PC-9 (cell line): ENCODE measurements at regions of chr16 and their contacts with region 1.

Region 1: DNA sequence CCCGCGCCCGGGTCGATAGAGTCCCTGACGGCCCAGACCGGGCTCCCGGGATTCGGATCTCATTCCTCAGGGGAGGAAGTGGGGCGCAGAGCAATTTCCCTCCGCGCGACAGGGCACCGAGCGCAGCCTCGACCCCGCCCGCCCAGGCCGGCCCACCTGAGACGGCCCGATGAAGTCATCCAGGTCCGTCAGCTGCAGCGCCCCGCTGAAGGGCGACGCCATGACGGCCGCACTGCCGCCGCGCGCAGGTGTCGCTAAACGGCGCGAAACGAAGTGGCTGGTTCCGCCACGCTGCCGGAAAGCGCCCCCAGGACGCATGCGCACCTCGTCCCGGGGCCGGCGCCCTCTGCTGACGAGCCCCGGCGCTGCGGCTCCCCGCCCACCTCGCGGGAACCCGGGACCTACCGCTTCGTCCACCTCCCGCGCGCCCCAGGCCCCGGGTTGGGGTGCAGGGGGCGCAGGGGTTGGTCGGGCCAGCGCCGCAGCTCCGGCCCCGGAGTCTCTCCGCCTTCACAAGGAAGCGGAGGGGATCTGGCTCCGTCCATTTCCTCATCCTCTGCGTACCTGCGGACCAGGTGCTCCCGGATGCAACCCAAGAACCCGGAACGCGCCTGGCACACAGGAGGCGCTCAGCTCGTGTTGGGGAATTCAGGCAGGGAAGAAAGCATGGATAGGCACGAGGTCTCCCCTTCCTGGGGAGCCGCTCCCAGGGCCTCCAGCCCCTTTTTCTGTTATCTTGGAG is at the start of gene CIAO3:
- DNase-seq: peak; percentile 78 to 96
- H3K4me3 ChIP-seq: peak within 1 kb of the TSS; percentile 91
- H3K27ac ChIP-seq: peak within 1 kb of the TSS; percentile 34; the same call in 1 of the 2 replicates
- H3K4me1 ChIP-seq: no peaks in the 10 kb centered on the region; the same call in 1 of the 2 replicates
- H3K27me3 ChIP-seq: no peaks in the 10 kb centered on the region
- CTCF ChIP-seq: peak; percentile 82
- total RNA-seq, gene CIAO3: 44.2 and 45.8 TPM in 2 replicates

Region 2: GRCh38 chr16:684067-684794 is 56.7 kb before region 1 on chr16 and contains the start of gene JMJD8:
- CTCF ChIA-PET with region 1: no interaction called
- POLR2A ChIA-PET with region 1: no interaction called
- intact Hi-C with region 1: no loop called
- DNase-seq: peak; percentile 92 to 99
- H3K4me3 ChIP-seq: peak within 1 kb of the TSS; percentile 83
- H3K27ac ChIP-seq: no peak within 1 kb of the TSS
- H3K4me1 ChIP-seq: peaks cover 37% of the 10 kb centered on the region
- H3K27me3 ChIP-seq: no peaks in the 10 kb centered on the region
- CTCF ChIP-seq: no peak
- total RNA-seq, gene JMJD8: 57.4 and 61.6 TPM in 2 replicates

Region 3: DNA sequence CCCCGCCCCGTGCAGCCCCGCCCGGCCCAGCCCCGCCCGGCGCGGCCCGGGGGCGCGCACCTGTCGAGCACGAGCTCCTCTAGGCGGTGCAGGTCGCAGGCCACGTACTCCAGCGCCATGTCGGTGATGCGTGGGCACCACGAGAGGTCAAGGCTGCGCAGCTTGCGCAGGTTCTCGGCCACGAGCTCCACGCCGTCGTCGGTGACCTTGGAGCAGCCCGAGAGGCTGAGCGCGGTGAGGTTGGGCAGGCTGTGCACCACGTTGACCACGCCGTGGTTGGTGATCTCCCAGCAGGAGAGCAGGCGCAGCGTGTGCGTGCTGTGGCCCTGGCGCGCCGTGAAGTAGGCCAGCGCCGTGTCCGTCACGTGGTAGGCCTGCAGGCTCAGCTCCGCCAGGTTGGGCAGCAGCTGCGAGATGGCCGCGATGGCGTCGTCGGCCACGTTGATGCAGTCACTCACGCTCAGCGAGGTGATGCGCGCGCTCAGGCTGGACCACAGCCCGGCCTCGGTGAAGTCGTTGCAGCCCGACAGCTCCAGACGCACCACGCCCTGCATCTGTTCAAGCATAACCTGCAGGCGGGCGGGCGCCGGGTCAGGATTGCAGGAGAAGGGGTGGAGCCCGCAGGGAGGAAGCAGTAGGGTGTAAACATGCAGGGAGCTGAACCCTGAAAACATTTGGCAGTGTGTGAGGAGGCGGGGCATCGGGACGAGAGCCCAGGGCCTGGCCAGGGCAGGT is 45.4 kb before region 1 on chr16:
- CTCF ChIA-PET with region 1: interaction called, 10 read pairs
- POLR2A ChIA-PET with region 1: no interaction called
- intact Hi-C with region 1: no loop called
- DNase-seq: peak; percentile 72 to 93
- H3K4me3 ChIP-seq: no peak overlapping the region
- H3K27ac ChIP-seq: no peak overlapping the region
- H3K4me1 ChIP-seq: peaks cover 8% of the 10 kb centered on the region
- H3K27me3 ChIP-seq: peaks cover 8% of the 10 kb centered on the region; the same call in 1 of the 2 replicates
- CTCF ChIP-seq: no peak

Region 4: DNA sequence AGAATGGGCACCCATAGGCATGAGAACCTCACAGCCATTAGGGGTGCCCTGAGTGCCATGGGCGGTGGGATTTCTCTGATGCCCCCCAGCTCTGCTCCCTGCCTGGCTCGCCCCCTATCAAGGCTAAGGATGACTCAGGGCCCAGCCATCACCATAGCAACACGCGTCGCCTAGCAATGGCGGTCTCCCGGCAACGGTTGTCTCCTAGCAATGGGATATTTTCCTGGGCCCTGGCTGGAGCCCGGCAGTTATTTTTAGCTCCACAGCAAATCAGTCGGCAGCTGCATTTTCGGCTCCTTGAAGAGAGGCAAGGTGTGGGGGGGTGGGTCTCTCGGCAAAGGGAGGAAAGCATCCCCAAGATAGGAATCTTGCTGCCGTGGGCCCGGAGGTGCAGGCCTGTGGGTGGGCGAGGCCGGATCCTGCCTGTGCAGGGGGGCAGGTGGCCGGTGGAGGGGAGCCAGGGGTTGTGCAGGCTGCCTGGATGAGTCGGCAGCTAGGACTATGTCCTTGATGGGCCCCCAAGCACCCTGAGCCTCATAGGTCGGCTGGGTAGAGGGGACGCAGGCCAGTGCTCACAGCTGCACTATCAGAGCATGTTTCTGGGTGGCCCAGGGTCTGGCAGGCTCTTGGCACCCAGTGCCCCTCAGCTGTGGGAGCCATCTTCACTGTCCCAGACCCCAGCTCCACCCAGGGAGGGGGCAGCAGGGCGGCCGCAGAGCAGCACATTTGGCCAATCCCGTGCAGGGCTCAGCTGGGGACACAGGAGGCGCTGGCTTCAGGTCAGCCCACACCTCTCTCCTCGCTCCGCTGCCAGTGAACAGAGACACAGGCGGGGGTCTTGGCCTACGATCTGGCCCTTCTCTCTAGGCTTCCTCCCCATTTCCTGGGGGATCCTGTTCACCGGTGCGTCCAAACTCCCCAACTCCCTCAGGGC is 31.1 kb before region 1 on chr16:
- CTCF ChIA-PET with region 1: no interaction called
- POLR2A ChIA-PET with region 1: no interaction called
- intact Hi-C with region 1: no loop called
- DNase-seq: peak; percentile 66
- H3K4me3 ChIP-seq: no peak overlapping the region
- H3K27ac ChIP-seq: no peak overlapping the region
- H3K4me1 ChIP-seq: peaks cover 25% of the 10 kb centered on the region
- H3K27me3 ChIP-seq: peaks cover 47% of the 10 kb centered on the region
- CTCF ChIP-seq: no peak

Region 5: DNA sequence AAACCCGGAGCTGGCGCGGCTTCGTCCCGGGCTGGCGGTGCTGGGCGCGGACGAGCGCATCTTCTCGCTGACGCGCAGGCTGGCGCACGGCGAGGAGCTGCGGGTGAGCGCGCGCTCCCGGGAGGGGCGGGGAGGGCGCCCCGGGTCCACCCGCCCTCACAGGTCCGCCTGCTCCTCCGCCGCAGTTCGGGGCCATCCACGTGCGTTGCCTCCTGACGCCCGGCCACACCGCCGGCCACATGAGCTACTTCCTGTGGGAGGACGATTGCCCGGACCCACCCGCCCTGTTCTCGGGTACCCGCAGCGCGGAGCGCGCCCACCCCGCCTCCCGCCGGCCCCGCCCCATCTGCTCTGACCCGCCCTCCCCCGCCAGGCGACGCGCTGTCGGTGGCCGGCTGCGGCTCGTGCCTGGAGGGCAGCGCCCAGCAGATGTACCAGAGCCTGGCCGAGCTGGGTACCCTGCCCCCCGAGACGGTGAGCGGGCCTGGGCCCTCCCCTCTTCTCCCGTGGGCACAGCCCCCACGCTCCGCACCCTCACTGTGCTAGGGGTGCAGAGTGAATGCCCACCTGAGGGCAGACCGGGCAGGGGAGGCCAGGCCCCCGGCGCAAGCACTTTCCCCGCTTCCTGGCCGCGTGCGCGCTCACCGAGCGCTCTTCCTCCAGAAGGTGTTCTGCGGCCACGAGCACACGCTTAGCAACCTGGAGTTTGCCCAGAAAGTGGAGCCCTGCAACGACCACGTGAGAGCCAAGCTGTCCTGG is 12.6 kb before region 1 on chr16:
- CTCF ChIA-PET with region 1: no interaction called
- POLR2A ChIA-PET with region 1: interaction called, 3 read pairs
- intact Hi-C with region 1: loop called (anchors 1 kb)
- DNase-seq: peak; percentile 70 to 87
- H3K4me3 ChIP-seq: peak overlapping the region; percentile 93; the same call in 1 of the 2 replicates
- H3K27ac ChIP-seq: no peak overlapping the region
- H3K4me1 ChIP-seq: no peaks in the 10 kb centered on the region
- H3K27me3 ChIP-seq: no peaks in the 10 kb centered on the region
- CTCF ChIP-seq: no peak

Region 6: GRCh38 chr16:777826-778225 is 36.9 kb after region 1 on chr16:
- CTCF ChIA-PET with region 1: no interaction called
- POLR2A ChIA-PET with region 1: interaction called, 3 read pairs
- intact Hi-C with region 1: loop called (anchors 2 kb)
- DNase-seq: peak in 1 of 2 experiments; percentile 62
- H3K4me3 ChIP-seq: no peak overlapping the region
- H3K27ac ChIP-seq: no peak overlapping the region
- H3K4me1 ChIP-seq: no peaks in the 10 kb centered on the region
- H3K27me3 ChIP-seq: peaks cover 30% of the 10 kb centered on the region
- CTCF ChIP-seq: no peak